ENCODE measurements at regions of chr11 and their contacts with region 1.

Region 1: DNA sequence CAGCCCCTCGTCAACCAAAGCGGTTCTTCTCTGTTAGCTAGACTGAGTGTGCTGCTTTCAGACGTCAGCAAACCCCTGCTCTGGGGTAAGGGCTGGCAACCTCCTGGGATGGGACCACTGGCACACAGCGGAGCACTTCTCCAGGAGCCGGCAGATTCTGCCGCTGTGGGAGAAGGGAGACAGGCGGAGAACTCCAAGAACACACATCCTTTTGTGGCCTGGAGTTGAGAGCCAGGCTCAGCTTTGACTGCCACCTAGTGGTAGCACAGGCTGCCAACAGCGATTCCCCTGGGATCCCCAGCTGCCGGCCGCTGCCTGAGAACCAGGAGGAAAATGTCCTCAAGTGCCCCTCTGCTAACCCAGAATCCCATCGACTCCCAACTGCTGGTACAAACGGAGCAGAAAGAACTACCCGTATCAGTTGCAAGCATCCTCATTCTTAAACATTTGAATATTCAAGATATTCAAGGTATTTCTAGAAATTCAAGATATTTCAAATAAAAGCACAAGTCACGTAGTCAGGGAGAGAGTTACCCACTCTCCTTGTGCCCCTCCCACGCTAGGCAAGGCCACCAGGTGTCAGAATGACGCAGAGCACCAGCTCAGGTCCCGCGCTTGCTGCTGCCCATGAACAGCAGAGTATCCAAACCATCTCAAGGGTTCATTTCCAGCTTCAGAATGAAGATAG is 4.9 kb downstream of the LTO1 start:
- DNase-seq: peak; percentile 58
- ATAC-seq: peak; percentile 31
- H3K4me3 Mint-ChIP-seq: peak overlapping the region; percentile 24
- H3K27ac Mint-ChIP-seq: no peak overlapping the region
- H3K4me1 Mint-ChIP-seq: peaks cover 28% of the 10 kb centered on the region
- H3K27me3 Mint-ChIP-seq: peaks cover under 1% of the 10 kb centered on the region
- CTCF ChIP-seq: peak; percentile 27

Region 2: DNA sequence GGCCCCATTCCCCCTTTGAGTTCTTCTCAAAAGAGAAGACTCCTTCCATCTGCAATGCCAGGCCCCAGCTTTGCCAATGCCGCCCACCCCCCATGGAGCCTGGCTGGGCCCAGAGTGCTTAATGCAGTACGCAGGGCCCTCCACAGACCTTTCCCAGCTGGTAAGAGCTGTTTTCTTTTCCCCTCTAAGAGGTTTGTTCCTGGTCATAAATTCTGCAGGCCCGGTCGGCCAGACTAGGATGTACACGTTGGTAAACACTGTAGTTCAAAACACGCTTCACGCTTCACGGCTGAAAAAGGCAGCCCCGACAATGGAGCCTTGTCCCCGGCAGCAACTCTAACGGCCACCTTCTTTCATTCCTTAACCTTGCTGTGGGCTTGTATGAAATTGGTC is 436.6 kb before region 1 on chr11:
- CTCF ChIA-PET with region 1: no interaction called
- POLR2A ChIA-PET with region 1: no interaction called
- intact Hi-C with region 1: no loop called
- DNase-seq: no peak
- ATAC-seq: no peak
- H3K4me3 Mint-ChIP-seq: no peak overlapping the region
- H3K27ac Mint-ChIP-seq: no peak overlapping the region
- H3K4me1 Mint-ChIP-seq: no peaks in the 10 kb centered on the region
- H3K27me3 Mint-ChIP-seq: peaks cover 2% of the 10 kb centered on the region
- CTCF ChIP-seq: no peak

Region 3: DNA sequence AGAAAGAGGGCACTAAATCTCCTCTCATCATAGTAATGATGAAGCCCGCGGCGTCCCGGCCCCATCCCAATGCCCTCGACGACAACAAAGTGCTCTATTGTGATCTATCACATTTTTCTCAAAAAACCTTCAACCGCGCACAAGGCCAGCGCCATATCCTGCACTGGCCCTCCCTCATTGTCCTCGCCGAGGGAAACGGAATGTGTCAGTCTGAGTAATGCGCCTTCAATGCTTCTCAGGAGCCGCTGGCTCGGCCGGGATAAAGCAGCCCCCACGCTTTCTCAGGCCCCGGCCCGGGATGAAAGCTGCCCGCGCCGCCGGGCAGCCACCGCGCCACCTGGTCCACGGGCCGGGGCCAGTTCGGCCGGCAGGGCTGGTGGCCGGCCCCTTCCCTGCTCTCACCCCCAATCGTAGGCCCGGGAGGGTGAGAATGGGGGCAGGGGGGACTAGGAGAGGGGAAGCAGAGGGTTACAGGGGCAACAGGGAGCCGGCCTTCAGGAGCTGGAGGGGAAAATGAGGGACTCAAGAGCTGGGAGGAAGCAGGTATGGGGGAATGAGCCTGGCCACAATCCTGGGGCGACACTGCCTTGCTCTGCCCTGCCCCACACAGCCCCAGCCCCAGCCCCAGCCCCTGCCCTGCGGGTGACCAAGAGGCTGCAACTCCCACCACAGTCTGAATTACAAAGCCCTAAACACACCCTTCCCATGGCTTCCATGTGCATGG is 198.8 kb before region 1 on chr11:
- CTCF ChIA-PET with region 1: no interaction called
- POLR2A ChIA-PET with region 1: no interaction called
- intact Hi-C with region 1: no loop called
- DNase-seq: no peak
- ATAC-seq: no peak
- H3K4me3 Mint-ChIP-seq: no peak overlapping the region
- H3K27ac Mint-ChIP-seq: no peak overlapping the region
- H3K4me1 Mint-ChIP-seq: no peaks in the 10 kb centered on the region
- H3K27me3 Mint-ChIP-seq: peaks cover 13% of the 10 kb centered on the region
- CTCF ChIP-seq: no peak

Region 4: DNA sequence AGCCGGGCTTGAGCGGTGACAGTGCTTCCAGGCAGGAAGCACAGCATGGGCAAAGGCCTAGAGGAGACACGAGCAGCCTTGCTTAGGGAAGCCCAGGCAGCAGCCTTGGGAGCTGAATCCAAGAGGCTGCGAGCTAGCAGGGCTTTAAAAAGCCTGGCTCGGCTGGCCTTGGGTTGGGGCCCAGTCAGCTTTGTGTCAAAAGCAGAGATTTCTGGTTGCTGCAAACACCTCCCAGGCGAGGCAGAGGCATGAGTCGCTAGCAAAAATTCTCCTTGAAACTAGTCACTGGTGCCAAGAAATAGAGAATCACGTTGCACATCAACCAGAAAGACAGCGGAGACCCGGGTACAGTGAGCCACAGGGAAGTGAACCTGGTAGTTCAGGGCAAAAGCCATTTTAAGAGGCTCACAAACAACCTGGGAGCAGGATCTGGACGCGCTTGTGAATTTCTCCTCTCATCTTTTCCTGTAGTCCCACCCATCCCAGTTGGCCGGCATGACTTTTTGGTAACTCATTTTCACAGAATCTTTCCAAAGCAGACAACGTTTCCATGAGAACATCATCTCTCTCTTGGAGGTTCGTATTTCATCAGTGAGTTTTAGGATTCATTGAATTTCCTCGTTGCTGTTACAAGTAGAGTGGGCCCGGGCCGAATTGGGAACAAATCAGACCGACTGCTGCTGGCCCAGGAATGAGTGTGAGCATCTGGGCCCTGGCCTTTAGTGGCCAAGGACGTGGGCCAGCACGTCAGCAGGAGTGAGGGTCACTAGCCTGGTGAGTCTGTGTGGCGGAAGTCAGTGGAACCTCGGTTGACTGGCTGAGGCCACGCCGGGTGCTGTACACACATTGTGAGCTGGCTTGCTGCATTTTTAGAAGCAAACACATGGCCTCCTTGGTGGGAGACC is 121.2 kb after region 1 on chr11:
- CTCF ChIA-PET with region 1: no interaction called
- POLR2A ChIA-PET with region 1: no interaction called
- intact Hi-C with region 1: no loop called
- DNase-seq: no peak
- ATAC-seq: no peak
- H3K4me3 Mint-ChIP-seq: no peak overlapping the region
- H3K27ac Mint-ChIP-seq: no peak overlapping the region
- H3K4me1 Mint-ChIP-seq: no peaks in the 10 kb centered on the region
- H3K27me3 Mint-ChIP-seq: peaks cover 10% of the 10 kb centered on the region
- CTCF ChIP-seq: no peak

Region 5: GRCh38 chr11:70202898-70203748 is 532.8 kb after region 1 on chr11 and contains the start of gene FADD:
- CTCF ChIA-PET with region 1: no interaction called
- POLR2A ChIA-PET with region 1: interaction called, 9 read pairs
- intact Hi-C with region 1: loop called (anchors 2 kb)
- DNase-seq: peak; percentile 83
- ATAC-seq: peak; percentile 66
- H3K4me3 Mint-ChIP-seq: peak within 1 kb of the TSS; percentile 93
- H3K27ac Mint-ChIP-seq: peak within 1 kb of the TSS; percentile 92
- H3K4me1 Mint-ChIP-seq: peaks cover 28% of the 10 kb centered on the region
- H3K27me3 Mint-ChIP-seq: no peaks in the 10 kb centered on the region
- CTCF ChIP-seq: no peak
- total RNA-seq, gene FADD: 29.5 and 31.2 TPM in 2 replicates